CD8-positive, alpha-beta T cell (primary cell): ENCODE measurements at regions of chr3 and their contacts with region 1.

Region 1: GRCh38 chr3:125141596-125142419 is 70.7 kb downstream of the SLC12A8 start:
- DNase-seq: peak; percentile 29 to 89 (median 68)
- ATAC-seq: peak; percentile 88
- H3K4me3 ChIP-seq: peak overlapping the region; percentile 41 to 59
- H3K4me3 Mint-ChIP-seq: peak overlapping the region; percentile 75
- H3K27ac ChIP-seq: peak overlapping the region; percentile 12 to 59
- H3K27ac Mint-ChIP-seq: peak overlapping the region; percentile 87
- H3K4me1 ChIP-seq: peaks cover 19% of the 10 kb centered on the region
- H3K4me1 Mint-ChIP-seq: peaks cover 35% of the 10 kb centered on the region
- H3K27me3 ChIP-seq: no peaks in the 10 kb centered on the region
- H3K27me3 Mint-ChIP-seq: no peaks in the 10 kb centered on the region
- CTCF ChIP-seq: peak; percentile 40

Region 2: GRCh38 chr3:125003369-125003853 is 138.4 kb before region 1 on chr3:
- CTCF ChIA-PET with region 1: no interaction called
- POLR2A ChIA-PET with region 1: no interaction called
- intact Hi-C with region 1: loop called (anchors 5 kb)
- DNase-seq: no peak
- ATAC-seq: no peak
- H3K4me3 ChIP-seq: no peak overlapping the region
- H3K4me3 Mint-ChIP-seq: no peak overlapping the region
- H3K27ac ChIP-seq: no peak overlapping the region
- H3K27ac Mint-ChIP-seq: no peak overlapping the region
- H3K4me1 ChIP-seq: peaks cover 17% of the 10 kb centered on the region
- H3K4me1 Mint-ChIP-seq: peaks cover 21% of the 10 kb centered on the region
- H3K27me3 ChIP-seq: no peaks in the 10 kb centered on the region
- H3K27me3 Mint-ChIP-seq: no peaks in the 10 kb centered on the region
- CTCF ChIP-seq: no peak

Region 3: GRCh38 chr3:125119752-125120378 is 21.9 kb before region 1 on chr3:
- CTCF ChIA-PET with region 1: interaction called, 3 read pairs
- POLR2A ChIA-PET with region 1: interaction called, 3 read pairs
- intact Hi-C with region 1: loop called in 1 of 2 experiments (anchors 2 kb)
- DNase-seq: peak in 4 of 9 experiments; percentile 31 to 68 (median 56)
- ATAC-seq: peak; percentile 68
- H3K4me3 ChIP-seq: peak overlapping the region in 1 of 2 experiments; percentile 12
- H3K4me3 Mint-ChIP-seq: peak overlapping the region; percentile 59
- H3K27ac ChIP-seq: peak overlapping the region; percentile 11 to 74
- H3K27ac Mint-ChIP-seq: peak overlapping the region; percentile 71
- H3K4me1 ChIP-seq: peaks cover 47% of the 10 kb centered on the region
- H3K4me1 Mint-ChIP-seq: peaks cover 50% of the 10 kb centered on the region
- H3K27me3 ChIP-seq: no peaks in the 10 kb centered on the region
- H3K27me3 Mint-ChIP-seq: no peaks in the 10 kb centered on the region
- CTCF ChIP-seq: no peak

Region 4: DNA sequence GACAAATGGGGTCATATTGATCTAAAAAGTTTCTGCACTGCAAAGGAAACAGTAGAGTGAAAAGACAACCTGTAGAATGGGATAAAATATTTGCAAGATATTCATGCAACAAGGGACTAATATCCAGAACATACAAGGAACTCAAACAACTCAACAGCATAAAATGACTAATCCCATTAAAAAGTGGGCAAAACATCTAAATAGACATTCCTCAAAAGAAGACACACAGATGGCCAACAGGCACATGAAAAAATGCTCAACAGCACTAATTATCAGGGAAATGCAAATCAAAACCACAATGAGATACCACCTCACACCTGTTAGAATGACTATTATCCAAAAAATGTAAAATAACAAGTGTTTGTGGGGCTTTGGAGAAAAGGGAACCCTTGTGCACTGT is 61.9 kb after region 1 on chr3:
- CTCF ChIA-PET with region 1: no interaction called
- POLR2A ChIA-PET with region 1: no interaction called
- intact Hi-C with region 1: no loop called
- DNase-seq: no peak
- ATAC-seq: no peak
- H3K4me3 ChIP-seq: no peak overlapping the region
- H3K4me3 Mint-ChIP-seq: no peak overlapping the region
- H3K27ac ChIP-seq: no peak overlapping the region
- H3K27ac Mint-ChIP-seq: no peak overlapping the region
- H3K4me1 ChIP-seq: no peaks in the 10 kb centered on the region
- H3K4me1 Mint-ChIP-seq: no peaks in the 10 kb centered on the region
- H3K27me3 ChIP-seq: peaks cover 0 to under 1% of the 10 kb centered on the region in 2 experiments
- H3K27me3 Mint-ChIP-seq: peaks cover 13% of the 10 kb centered on the region
- CTCF ChIP-seq: no peak